CD4-positive, alpha-beta T cell (primary cell): ENCODE measurements at regions of chr5 and their contacts with region 1.

Region 1: DNA sequence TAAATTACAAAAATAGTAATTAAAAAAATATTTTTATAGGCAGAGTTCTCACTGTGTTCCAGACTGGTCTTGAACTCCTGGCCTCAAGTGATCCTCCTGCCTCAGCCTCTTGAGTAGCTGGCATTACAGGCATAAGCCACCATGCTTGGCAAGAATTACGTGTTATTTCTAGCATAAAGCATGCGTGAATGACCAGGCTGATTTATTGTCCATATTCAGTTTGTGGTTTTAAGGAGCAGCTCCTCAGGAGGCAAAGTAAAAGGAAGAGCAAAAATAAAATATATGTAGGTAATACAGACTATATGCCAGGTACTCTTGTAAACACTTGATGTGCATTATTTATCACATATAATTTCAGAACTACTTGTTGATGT is 7.1 kb upstream of the CD180 start:
- DNase-seq: no peak
- ATAC-seq: no peak
- H3K4me3 ChIP-seq: no peak overlapping the region
- H3K4me3 Mint-ChIP-seq: no peak overlapping the region
- H3K27ac ChIP-seq: peak overlapping the region in 1 of 2 donors; percentile 63
- H3K27ac Mint-ChIP-seq: peak overlapping the region; percentile 90
- H3K4me1 ChIP-seq: peaks cover 79% of the 10 kb centered on the region
- H3K4me1 Mint-ChIP-seq: peaks cover 96% of the 10 kb centered on the region
- H3K27me3 ChIP-seq: no peaks in the 10 kb centered on the region
- H3K27me3 Mint-ChIP-seq: no peaks in the 10 kb centered on the region
- CTCF ChIP-seq: no peak

Region 2: GRCh38 chr5:65801352-65801783 is 1402.3 kb before region 1 on chr5:
- CTCF ChIA-PET with region 1: no interaction called
- POLR2A ChIA-PET with region 1: no interaction called
- intact Hi-C with region 1: no loop called
- DNase-seq: no peak
- ATAC-seq: no peak
- H3K4me3 ChIP-seq: no peak overlapping the region
- H3K4me3 Mint-ChIP-seq: no peak overlapping the region
- H3K27ac ChIP-seq: no peak overlapping the region
- H3K27ac Mint-ChIP-seq: no peak overlapping the region
- H3K4me1 ChIP-seq: peaks cover 12% of the 10 kb centered on the region
- H3K4me1 Mint-ChIP-seq: peaks cover 34% of the 10 kb centered on the region
- H3K27me3 ChIP-seq: no peaks in the 10 kb centered on the region
- H3K27me3 Mint-ChIP-seq: no peaks in the 10 kb centered on the region
- CTCF ChIP-seq: no peak

Region 3: GRCh38 chr5:67176936-67177335 is 26.8 kb before region 1 on chr5:
- CTCF ChIA-PET with region 1: interaction called, 5 read pairs
- POLR2A ChIA-PET with region 1: no interaction called
- intact Hi-C with region 1: loop called in 1 of 2 experiments (anchors 2 kb)
- DNase-seq: peak in 1 of 14 experiments; percentile 37
- ATAC-seq: no peak
- H3K4me3 ChIP-seq: no peak overlapping the region
- H3K4me3 Mint-ChIP-seq: no peak overlapping the region
- H3K27ac ChIP-seq: no peak overlapping the region
- H3K27ac Mint-ChIP-seq: no peak overlapping the region
- H3K4me1 ChIP-seq: peaks cover 13% of the 10 kb centered on the region
- H3K4me1 Mint-ChIP-seq: peaks cover 25% of the 10 kb centered on the region
- H3K27me3 ChIP-seq: no peaks in the 10 kb centered on the region
- H3K27me3 Mint-ChIP-seq: no peaks in the 10 kb centered on the region
- CTCF ChIP-seq: no peak

Region 4: DNA sequence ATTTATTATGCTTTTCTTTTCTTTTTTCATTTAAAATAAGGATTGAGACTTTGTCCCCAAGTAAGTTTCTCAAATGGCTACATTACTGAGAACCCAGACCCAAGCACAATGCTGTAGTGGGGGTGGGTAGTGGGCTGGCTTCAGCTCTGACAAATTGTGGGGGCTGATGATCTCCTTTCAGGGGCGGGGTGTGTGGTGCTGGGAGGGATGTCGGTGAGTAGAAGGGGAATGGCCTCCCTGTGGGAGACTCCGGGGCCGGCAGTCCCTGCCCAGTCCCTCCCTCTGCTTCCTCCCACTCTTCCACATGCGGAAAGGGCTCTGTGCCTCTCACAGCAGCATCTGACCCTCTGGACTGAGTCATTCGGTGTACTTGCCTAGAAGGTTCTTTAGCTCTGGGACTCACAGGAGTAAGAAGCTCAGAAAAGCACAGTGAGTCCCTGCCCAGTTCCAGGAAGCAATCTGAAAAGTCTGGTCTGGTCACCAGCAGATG is 21.3 kb before region 1 on chr5:
- CTCF ChIA-PET with region 1: interaction called, 5 read pairs
- POLR2A ChIA-PET with region 1: no interaction called
- intact Hi-C with region 1: loop called in 1 of 2 experiments (anchors 2 kb)
- DNase-seq: peak in 1 of 14 experiments; percentile 58
- ATAC-seq: no peak
- H3K4me3 ChIP-seq: no peak overlapping the region
- H3K4me3 Mint-ChIP-seq: no peak overlapping the region
- H3K27ac ChIP-seq: peak overlapping the region in 1 of 2 donors; percentile 44
- H3K27ac Mint-ChIP-seq: peak overlapping the region; percentile 58
- H3K4me1 ChIP-seq: peaks cover 29% of the 10 kb centered on the region
- H3K4me1 Mint-ChIP-seq: peaks cover 54% of the 10 kb centered on the region
- H3K27me3 ChIP-seq: no peaks in the 10 kb centered on the region
- H3K27me3 Mint-ChIP-seq: no peaks in the 10 kb centered on the region
- CTCF ChIP-seq: no peak